Activated CD4-positive, alpha-beta T cell treated with anti-CD3 and anti-CD28 coated beads for 36 hours (primary cell): ENCODE measurements at regions of chr4 and their contacts with region 1.

Region 1: DNA sequence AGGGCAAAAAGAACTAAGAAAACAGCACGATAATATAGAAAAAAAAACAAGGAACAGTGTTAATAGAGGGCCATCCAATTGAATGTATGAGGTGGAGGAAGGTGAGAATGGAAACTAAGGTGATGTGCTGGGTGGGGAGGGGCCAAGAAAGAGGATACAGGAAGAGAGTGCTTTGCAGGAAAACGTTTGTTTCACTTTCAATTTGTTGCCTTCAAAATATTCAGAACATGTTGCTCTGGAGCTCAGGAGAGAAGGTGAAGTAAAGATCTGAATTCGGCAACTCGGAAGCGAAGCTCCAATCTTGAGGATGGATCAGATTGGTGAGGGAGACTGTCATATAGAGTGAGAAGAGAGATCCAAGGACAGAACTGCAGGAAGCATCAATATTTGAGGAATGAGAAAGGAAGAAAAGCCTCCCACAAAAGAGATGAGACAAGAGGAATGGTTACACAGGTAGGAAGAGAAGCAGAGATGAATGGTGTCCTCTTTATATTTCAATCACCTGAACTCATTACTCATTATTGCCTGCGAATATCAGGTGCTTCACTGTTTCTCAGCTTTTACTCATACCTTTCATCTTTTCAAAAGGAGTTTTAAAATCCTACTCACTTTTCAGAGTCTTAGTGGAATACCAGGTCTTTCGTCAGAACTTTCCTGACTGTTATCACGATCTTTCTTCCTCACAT is 14.7 kb upstream of the SEC24D start:
- DNase-seq: peak; percentile 43
- ATAC-seq: peak; percentile 88
- H3K4me3 Mint-ChIP-seq: peak overlapping the region; percentile 85
- H3K27ac Mint-ChIP-seq: peak overlapping the region; percentile 91
- H3K4me1 Mint-ChIP-seq: peaks cover 28% of the 10 kb centered on the region
- H3K27me3 Mint-ChIP-seq: peaks cover 3% of the 10 kb centered on the region

Region 2: GRCh38 chr4:117868201-117868600 is 982.4 kb before region 1 on chr4:
- CTCF ChIA-PET with region 1: no interaction called
- POLR2A ChIA-PET with region 1: no interaction called
- intact Hi-C with region 1: no loop called
- DNase-seq: no peak
- ATAC-seq: no peak
- H3K4me3 Mint-ChIP-seq: no peak overlapping the region
- H3K27ac Mint-ChIP-seq: no peak overlapping the region
- H3K4me1 Mint-ChIP-seq: no peaks in the 10 kb centered on the region
- H3K27me3 Mint-ChIP-seq: no peaks in the 10 kb centered on the region

Region 3: GRCh38 chr4:118586357-118586790 is 264.3 kb before region 1 on chr4:
- CTCF ChIA-PET with region 1: no interaction called
- POLR2A ChIA-PET with region 1: no interaction called
- intact Hi-C with region 1: loop called in 1 of 2 experiments (anchors 5 kb)
- DNase-seq: no peak
- ATAC-seq: no peak
- H3K4me3 Mint-ChIP-seq: no peak overlapping the region
- H3K27ac Mint-ChIP-seq: no peak overlapping the region
- H3K4me1 Mint-ChIP-seq: peaks cover 9% of the 10 kb centered on the region
- H3K27me3 Mint-ChIP-seq: peaks cover 16% of the 10 kb centered on the region

Region 4: GRCh38 chr4:118826723-118827444 is 23.7 kb before region 1 on chr4:
- CTCF ChIA-PET with region 1: no interaction called
- POLR2A ChIA-PET with region 1: no interaction called
- intact Hi-C with region 1: no loop called
- DNase-seq: no peak
- ATAC-seq: peak; percentile 55
- H3K4me3 Mint-ChIP-seq: no peak overlapping the region
- H3K27ac Mint-ChIP-seq: peak overlapping the region; percentile 69
- H3K4me1 Mint-ChIP-seq: peaks cover 30% of the 10 kb centered on the region
- H3K27me3 Mint-ChIP-seq: no peaks in the 10 kb centered on the region

Region 5: DNA sequence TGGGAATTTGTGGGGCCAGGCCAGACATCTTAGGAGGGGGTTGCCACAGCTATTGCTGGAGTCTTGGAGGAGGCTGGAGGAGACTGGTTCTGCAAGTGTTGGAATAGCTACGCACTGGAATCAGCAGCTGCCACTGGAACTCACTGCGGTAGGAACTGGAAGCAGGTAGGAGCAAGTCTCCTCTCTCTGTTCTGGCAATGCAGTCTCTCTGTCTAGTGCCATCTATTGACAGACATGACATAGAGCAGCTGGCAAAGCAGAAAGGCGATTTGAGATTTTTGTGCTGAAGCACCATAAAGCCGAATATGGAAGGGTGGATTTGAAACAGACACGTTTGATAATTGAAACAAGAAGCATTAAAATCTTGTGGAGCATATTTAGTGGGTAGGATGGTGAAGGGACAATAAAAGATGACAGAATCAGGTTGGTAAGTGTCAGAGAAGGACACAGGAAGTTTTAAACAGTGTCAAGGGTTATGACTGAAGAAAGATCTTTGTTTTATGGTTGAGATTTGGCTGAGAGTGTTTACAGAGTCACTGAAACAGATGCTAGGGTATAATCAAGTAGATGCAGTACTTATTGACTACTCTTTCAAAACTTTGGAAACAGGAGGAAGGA is 14.6 kb after region 1 on chr4:
- CTCF ChIA-PET with region 1: interaction called, 10 read pairs
- POLR2A ChIA-PET with region 1: no interaction called
- intact Hi-C with region 1: no loop called
- DNase-seq: peak; percentile 23
- ATAC-seq: peak; percentile 70
- H3K4me3 Mint-ChIP-seq: no peak overlapping the region
- H3K27ac Mint-ChIP-seq: no peak overlapping the region
- H3K4me1 Mint-ChIP-seq: peaks cover 5% of the 10 kb centered on the region
- H3K27me3 Mint-ChIP-seq: no peaks in the 10 kb centered on the region

Region 6: DNA sequence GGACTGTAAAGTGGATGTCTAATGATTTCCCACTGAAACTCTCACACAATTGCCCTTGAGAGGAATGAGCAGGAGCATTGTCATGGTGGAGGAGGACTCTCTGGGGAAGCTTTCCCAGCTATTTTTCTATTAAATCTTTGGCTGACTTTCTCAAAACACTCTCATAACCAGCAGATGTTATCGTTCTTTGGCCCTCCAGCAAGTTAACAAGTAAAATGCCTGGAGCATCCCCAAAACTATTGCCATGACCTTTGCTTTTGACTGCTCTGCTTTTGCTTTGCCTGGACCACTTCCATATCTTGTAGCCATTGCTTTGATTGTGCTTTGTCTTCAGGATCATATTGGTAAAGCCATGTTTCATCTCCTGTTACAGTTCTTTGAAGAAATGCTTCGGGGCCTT is 898.2 kb after region 1 on chr4:
- CTCF ChIA-PET with region 1: no interaction called
- POLR2A ChIA-PET with region 1: no interaction called
- intact Hi-C with region 1: no loop called
- DNase-seq: no peak
- ATAC-seq: no peak
- H3K4me3 Mint-ChIP-seq: no peak overlapping the region
- H3K27ac Mint-ChIP-seq: no peak overlapping the region
- H3K4me1 Mint-ChIP-seq: no peaks in the 10 kb centered on the region
- H3K27me3 Mint-ChIP-seq: peaks cover 5% of the 10 kb centered on the region

Region 7: DNA sequence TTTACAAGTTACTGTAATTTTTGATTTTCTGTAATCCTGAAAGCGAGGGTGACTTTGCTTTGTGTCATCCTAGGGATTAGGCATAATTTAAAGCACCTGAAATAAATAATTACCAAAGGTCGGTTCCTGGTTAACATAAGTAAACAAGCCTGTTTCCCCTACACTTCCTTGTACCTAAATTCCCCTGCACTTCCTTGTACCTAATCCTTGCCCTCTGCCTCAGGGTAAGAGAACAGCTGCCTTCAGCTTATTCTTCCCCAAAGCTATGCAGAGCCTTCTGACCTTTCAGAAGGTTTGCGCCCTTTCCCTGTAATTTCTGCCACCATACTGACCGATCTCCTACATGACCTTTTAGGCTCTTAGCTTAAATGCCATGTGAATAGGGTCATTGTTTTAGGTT is 944.1 kb after region 1 on chr4:
- CTCF ChIA-PET with region 1: no interaction called
- POLR2A ChIA-PET with region 1: no interaction called
- intact Hi-C with region 1: no loop called
- DNase-seq: no peak
- ATAC-seq: no peak
- H3K4me3 Mint-ChIP-seq: no peak overlapping the region
- H3K27ac Mint-ChIP-seq: no peak overlapping the region
- H3K4me1 Mint-ChIP-seq: no peaks in the 10 kb centered on the region
- H3K27me3 Mint-ChIP-seq: peaks cover 12% of the 10 kb centered on the region